ENCODE measurements at regions of chr5 and their contacts with region 1.

Region 1: DNA sequence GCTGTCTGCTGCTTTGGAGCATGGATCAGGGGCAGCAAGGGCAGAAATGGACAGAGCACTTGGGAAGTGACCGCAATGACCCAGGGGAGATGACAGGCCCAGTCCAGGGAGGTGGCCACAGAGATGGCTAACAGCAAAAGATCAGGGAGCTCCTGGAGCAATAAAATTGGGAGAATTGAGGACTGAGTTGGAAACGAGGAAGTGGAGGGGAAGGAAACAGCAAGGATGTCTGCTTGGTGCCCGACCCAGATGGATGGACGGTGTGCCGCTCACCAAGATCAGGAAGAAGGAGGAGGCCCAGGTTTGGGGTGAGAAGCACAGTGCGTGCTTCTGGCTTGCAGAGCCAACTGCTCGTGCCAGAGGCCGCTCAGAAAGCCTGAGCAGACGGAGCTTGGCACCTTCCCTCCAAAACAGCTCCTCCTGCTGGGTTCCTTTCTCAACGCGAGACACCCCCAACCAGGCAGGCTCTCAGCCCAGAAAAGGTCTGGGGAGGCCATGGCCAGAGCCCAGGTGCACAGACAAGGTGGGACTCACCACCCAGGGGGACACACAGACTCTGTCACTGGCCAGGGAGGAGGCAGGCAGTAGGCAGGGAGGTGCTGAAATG is 1.7 kb upstream of the SLC34A1 start:
- DNase-seq: no peak
- ATAC-seq: peak; percentile 63 to 78

Region 2: DNA sequence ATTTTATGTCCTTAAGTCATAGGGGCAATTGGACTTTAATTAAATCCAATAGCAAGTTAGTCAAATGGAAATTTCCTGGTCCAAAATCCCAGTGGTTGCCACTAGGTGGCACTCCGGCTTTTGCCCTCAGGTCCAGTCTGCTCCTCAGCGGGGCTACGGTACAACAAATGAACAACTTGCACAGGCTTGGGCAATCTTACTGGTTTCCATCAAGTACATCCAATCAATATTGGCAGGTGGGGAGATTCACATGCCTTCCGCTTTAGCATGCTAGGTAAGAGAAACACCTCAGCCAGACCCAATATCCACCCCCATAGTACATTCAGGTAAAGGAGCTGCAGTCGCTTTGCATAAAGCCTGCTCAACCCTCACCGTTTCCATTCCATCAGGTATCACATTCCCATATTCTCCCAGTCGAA is 64.6 kb before region 1 on chr5:
- intact Hi-C with region 1: loop called in 1 of 2 experiments (anchors 5 kb)
- DNase-seq: peak; percentile 74
- ATAC-seq: peak; percentile 48 to 53